Common myeloid progenitor, CD34-positive (primary cell): ENCODE measurements at regions of chr7 and their contacts with region 1.

Region 1: DNA sequence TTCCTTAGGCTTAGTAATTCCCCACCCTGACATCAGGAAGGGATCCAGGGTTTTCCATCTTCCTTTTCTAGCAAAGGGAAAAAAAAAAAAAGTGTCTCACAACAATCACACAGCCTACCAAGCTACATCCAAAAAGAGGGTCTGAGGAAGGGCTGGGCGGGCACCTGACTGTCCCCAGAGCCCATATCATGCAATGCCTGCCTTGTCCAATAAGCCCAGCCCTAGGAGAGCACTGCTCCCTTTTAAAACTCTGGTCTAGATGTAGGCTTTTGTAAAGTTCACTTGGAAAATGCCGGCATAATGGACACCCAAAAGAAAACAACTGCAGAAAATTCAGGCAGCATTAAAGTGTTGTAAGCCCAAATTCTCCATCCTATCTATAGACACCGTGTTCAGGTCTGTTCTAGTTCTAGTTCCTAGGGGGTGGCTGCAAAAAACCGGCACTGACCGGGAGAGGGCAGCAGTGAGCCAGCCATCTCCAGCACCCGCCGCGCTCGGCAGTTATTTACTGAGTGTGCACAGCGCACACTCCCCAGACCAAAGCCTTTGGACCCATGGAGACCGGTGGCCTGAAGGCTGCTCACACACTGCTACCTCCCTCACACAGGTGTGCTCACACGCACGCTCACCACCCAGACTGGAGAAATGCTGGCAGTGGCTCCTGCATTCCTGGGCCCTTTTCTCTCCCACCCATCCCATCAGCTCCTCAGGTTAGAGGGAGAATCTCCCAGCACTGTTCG is 48.7 kb downstream of the PODXL start:
- DNase-seq: peak; percentile 63 to 85 (median 76)
- H3K4me3 ChIP-seq: no peak overlapping the region
- H3K27ac ChIP-seq: no peak overlapping the region
- H3K4me1 ChIP-seq: peaks cover 0 to 13% (median 6%) of the 10 kb centered on the region in 4 experiments
- H3K27me3 ChIP-seq: no peaks in the 10 kb centered on the region

Region 2: DNA sequence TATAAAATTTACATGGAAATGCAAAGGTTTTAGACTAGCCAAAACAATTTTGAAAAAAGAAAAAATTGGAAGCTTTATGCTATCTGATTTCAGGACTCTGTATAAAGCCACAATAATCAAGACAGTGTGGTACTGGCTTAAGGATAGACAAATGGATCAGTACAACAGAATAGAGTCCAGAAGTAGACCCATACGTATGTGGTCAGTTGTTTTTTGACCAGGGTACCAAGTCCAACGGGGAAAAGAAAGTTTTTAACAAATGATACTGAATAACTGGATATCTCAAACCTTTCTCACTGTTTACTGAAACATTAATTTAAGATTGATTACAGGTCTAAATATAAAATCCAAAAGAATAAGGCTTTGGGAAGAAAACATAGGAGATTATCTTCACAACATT is 31.0 kb before region 1 on chr7:
- CTCF ChIA-PET with region 1: no interaction called
- POLR2A ChIA-PET with region 1: no interaction called
- DNase-seq: no peak
- H3K4me3 ChIP-seq: no peak overlapping the region
- H3K27ac ChIP-seq: no peak overlapping the region
- H3K4me1 ChIP-seq: no peaks in the 10 kb centered on the region
- H3K27me3 ChIP-seq: no peaks in the 10 kb centered on the region

Region 3: GRCh38 chr7:131488361-131488760 is 19.4 kb before region 1 on chr7:
- CTCF ChIA-PET with region 1: interaction called, 113 read pairs
- POLR2A ChIA-PET with region 1: no interaction called
- DNase-seq: no peak
- H3K4me3 ChIP-seq: no peak overlapping the region
- H3K27ac ChIP-seq: no peak overlapping the region
- H3K4me1 ChIP-seq: no peaks in the 10 kb centered on the region
- H3K27me3 ChIP-seq: no peaks in the 10 kb centered on the region

Region 4: DNA sequence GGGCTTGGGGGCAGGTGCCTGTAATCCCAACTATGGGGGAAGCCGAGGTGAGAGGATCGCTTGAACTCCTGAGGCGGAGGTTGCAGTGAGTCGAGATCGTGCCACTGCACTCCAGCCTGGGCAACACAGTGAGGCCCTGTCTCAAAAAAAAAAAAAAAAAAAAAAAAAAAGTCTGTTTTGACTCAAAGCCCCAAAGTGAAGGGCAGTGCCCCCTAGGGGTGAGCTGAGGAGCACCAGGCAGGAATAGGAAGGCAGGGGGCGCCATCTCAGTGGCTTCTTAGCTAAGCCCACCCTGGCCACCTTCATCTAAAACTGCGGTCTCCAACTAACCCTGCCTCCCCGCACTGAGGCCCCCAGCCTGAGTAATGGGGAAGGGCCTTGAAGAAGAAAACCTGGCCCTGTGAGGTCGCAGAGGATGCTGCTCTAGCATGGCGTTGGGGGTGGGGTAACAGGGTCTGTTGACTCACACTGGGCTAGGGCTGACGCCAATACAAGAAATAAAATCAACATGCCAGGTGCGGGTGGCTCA is 38.9 kb after region 1 on chr7:
- CTCF ChIA-PET with region 1: interaction called, 14 read pairs
- POLR2A ChIA-PET with region 1: no interaction called
- DNase-seq: peak; percentile 77 to 81 (median 79)
- H3K4me3 ChIP-seq: no peak overlapping the region
- H3K27ac ChIP-seq: no peak overlapping the region
- H3K4me1 ChIP-seq: peaks cover 0 to 8% (median 5%) of the 10 kb centered on the region in 4 experiments
- H3K27me3 ChIP-seq: peaks cover 0 to 5% (median 0%) of the 10 kb centered on the region in 5 experiments

Region 5: GRCh38 chr7:131654668-131655326 is 147.0 kb after region 1 on chr7:
- CTCF ChIA-PET with region 1: interaction called, 17 read pairs
- POLR2A ChIA-PET with region 1: no interaction called
- DNase-seq: peak; percentile 79 to 86 (median 85)
- H3K4me3 ChIP-seq: no peak overlapping the region
- H3K27ac ChIP-seq: no peak overlapping the region
- H3K4me1 ChIP-seq: no peaks in the 10 kb centered on the region
- H3K27me3 ChIP-seq: peaks cover 0 to 2% (median 0%) of the 10 kb centered on the region in 5 experiments